Activated B cell treated with CpG ODN at 0.5 μM for 24 hours (primary cell): ENCODE measurements at regions of chr2 and their contacts with region 1.

Region 1: DNA sequence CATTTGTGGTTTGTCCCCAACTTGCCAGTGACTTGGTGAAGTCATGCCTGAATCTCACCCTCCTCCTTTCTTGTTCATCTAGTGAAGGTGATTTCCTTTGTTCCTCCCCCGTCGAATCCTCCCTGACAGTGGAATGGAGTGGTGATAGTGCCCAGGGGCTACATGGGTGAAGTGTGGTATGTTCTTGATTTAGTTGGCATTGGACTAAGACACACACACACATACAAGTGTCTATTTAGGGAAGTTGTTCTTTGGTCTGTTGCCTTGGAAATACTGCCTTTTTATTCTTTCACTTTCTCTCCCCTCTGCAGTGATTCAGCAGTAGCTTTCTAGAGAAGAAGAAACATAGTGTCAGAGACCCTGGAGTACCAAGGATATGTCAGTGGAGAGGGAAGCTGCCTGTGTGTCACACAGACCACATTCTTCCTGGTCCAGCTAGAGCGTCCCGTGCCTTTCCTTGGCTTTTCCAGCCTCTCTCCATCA is 10.9 kb downstream of the INPP4A start:
- DNase-seq: no peak
- ATAC-seq: peak; percentile 83
- H3K4me3 Mint-ChIP-seq: peak overlapping the region; percentile 67
- H3K27ac Mint-ChIP-seq: peak overlapping the region; percentile 81
- H3K4me1 Mint-ChIP-seq: peaks cover 63% of the 10 kb centered on the region
- H3K27me3 Mint-ChIP-seq: no peaks in the 10 kb centered on the region
- CTCF ChIP-seq: no peak

Region 2: DNA sequence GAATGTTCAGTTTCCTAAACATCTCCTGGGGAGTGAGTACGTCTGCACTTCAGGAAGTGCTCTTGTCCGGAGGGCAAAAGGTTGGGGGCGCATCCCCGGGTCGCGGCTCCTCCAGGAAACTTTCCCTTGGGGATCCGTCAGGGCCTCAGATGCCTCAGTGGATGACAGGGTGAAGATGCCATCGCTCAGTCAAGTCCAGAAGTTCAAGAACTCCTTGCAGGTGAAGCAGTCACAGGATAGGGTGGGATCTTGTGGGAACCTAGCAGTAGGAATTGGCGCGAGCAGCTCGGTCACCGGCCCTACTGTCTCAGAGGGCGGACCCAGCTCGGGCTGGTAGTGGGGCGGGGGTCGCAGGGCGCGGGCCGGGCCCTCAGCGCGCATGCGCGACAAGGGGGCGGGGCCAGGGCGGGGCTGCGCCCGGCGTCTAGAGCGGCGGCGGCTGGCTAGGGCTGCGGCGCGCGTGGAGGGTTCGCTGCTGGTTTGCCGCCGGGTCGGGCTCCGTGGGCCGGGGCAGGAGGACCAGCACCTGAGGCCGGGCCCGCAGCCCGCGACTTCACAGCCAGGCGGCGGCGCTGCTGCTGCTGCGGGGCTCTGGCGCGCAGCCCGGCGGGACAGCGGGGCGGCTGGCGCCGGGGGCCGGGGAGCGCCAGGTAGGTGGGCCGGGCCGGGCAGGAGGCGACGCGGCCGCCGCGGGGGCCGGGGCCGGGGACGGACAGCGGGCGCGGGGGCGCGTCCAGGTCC is 10.9 kb before region 1 on chr2 and contains the start of gene INPP4A:
- CTCF ChIA-PET with region 1: no interaction called
- POLR2A ChIA-PET with region 1: interaction called, 4 read pairs
- intact Hi-C with region 1: loop called (anchors 1 kb)
- DNase-seq: peak; percentile 79
- ATAC-seq: peak; percentile 93
- H3K4me3 Mint-ChIP-seq: peak within 1 kb of the TSS; percentile 90
- H3K27ac Mint-ChIP-seq: peak within 1 kb of the TSS; percentile 82
- H3K4me1 Mint-ChIP-seq: peaks cover 23% of the 10 kb centered on the region
- H3K27me3 Mint-ChIP-seq: no peaks in the 10 kb centered on the region
- CTCF ChIP-seq: no peak
- total RNA-seq, gene INPP4A: 19.6 and 26.6 TPM in 2 replicates

Region 3: GRCh38 chr2:98496750-98497493 is 41.4 kb after region 1 on chr2:
- CTCF ChIA-PET with region 1: no interaction called
- POLR2A ChIA-PET with region 1: no interaction called
- intact Hi-C with region 1: no loop called
- DNase-seq: no peak
- ATAC-seq: no peak
- H3K4me3 Mint-ChIP-seq: no peak overlapping the region
- H3K27ac Mint-ChIP-seq: no peak overlapping the region
- H3K4me1 Mint-ChIP-seq: peaks cover 4% of the 10 kb centered on the region
- H3K27me3 Mint-ChIP-seq: no peaks in the 10 kb centered on the region
- CTCF ChIP-seq: no peak

Region 4: DNA sequence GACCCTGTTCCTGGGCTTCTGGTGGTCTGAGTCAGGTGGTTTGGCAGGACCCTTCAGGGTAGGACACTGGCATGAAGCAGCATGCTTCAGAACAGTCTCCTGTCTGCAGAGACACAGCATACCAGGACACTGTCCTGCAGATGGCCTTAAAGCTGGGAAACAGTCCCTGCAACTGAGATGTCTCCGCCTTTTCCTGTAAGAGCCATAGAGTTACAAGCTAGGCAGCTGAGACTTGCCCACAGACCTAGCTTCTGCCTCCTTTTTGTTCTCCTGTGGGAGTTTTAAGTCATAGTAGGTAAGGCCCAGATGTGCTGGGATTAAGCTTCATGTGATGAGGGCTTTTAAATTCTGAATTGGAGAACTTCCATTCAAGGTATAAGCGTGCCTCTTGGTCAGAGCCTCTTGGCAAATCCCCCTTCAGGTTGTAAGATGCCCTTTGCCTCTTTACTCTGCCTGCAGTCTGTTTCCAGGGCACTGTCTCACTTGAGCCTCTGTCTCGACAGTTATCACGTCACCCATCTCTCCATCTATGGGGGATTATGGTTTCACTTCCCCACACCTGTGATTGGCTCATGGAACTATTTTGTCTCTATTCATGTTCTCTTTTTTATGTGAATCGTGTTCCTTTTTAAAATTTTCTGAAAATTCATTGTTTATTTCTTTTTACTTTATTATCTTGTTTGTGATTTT is 101.0 kb after region 1 on chr2:
- CTCF ChIA-PET with region 1: no interaction called
- POLR2A ChIA-PET with region 1: interaction called, 3 read pairs
- intact Hi-C with region 1: loop called (anchors 2 kb)
- DNase-seq: no peak
- ATAC-seq: peak; percentile 99
- H3K4me3 Mint-ChIP-seq: no peak overlapping the region
- H3K27ac Mint-ChIP-seq: peak overlapping the region; percentile 71
- H3K4me1 Mint-ChIP-seq: peaks cover 39% of the 10 kb centered on the region
- H3K27me3 Mint-ChIP-seq: no peaks in the 10 kb centered on the region
- CTCF ChIP-seq: no peak

Region 5: GRCh38 chr2:98757904-98758421 is 302.4 kb after region 1 on chr2:
- CTCF ChIA-PET with region 1: no interaction called
- POLR2A ChIA-PET with region 1: no interaction called
- intact Hi-C with region 1: loop called (anchors 10 kb)
- DNase-seq: no peak
- ATAC-seq: peak; percentile 93
- H3K4me3 Mint-ChIP-seq: peak overlapping the region; percentile 64
- H3K27ac Mint-ChIP-seq: peak overlapping the region; percentile 67
- H3K4me1 Mint-ChIP-seq: peaks cover 62% of the 10 kb centered on the region
- H3K27me3 Mint-ChIP-seq: no peaks in the 10 kb centered on the region
- CTCF ChIP-seq: no peak

Region 6: DNA sequence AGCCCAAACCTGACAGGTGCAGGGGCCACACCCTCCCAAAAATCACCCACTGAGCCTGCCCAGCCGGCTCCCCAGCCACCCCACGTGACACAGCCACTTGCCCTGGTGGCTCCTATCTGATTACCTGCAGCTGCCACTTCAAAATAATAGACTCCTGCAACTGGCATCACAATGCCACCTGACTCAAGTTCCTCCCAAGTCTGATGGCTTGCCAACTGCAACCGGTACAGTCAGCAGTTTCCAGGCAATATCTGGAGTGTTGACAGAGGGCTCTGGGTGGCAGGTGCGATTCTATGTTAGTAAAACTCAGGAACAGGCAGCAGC is 414.4 kb after region 1 on chr2:
- CTCF ChIA-PET with region 1: no interaction called
- POLR2A ChIA-PET with region 1: no interaction called
- intact Hi-C with region 1: no loop called
- DNase-seq: no peak
- ATAC-seq: no peak
- H3K4me3 Mint-ChIP-seq: no peak overlapping the region
- H3K27ac Mint-ChIP-seq: no peak overlapping the region
- H3K4me1 Mint-ChIP-seq: no peaks in the 10 kb centered on the region
- H3K27me3 Mint-ChIP-seq: no peaks in the 10 kb centered on the region
- CTCF ChIP-seq: no peak